Dendritic cell treated with granulocyte-macrophage colony-stimulating factor and Interleukin-4, amounts not matched to agents 40 ng/mL and 50 ng/mL, for 4 days (primary cell): ENCODE measurements at regions of chr12 and their contacts with region 1.

Region 1: GRCh38 chr12:6851921-6852650 is at the start of gene USP5:
- H3K4me3 Mint-ChIP-seq: peak within 1 kb of the TSS; percentile 87
- H3K27ac Mint-ChIP-seq: peak within 1 kb of the TSS; percentile 91
- H3K4me1 Mint-ChIP-seq: peaks cover 35% of the 10 kb centered on the region
- H3K27me3 Mint-ChIP-seq: no peaks in the 10 kb centered on the region

Region 2: DNA sequence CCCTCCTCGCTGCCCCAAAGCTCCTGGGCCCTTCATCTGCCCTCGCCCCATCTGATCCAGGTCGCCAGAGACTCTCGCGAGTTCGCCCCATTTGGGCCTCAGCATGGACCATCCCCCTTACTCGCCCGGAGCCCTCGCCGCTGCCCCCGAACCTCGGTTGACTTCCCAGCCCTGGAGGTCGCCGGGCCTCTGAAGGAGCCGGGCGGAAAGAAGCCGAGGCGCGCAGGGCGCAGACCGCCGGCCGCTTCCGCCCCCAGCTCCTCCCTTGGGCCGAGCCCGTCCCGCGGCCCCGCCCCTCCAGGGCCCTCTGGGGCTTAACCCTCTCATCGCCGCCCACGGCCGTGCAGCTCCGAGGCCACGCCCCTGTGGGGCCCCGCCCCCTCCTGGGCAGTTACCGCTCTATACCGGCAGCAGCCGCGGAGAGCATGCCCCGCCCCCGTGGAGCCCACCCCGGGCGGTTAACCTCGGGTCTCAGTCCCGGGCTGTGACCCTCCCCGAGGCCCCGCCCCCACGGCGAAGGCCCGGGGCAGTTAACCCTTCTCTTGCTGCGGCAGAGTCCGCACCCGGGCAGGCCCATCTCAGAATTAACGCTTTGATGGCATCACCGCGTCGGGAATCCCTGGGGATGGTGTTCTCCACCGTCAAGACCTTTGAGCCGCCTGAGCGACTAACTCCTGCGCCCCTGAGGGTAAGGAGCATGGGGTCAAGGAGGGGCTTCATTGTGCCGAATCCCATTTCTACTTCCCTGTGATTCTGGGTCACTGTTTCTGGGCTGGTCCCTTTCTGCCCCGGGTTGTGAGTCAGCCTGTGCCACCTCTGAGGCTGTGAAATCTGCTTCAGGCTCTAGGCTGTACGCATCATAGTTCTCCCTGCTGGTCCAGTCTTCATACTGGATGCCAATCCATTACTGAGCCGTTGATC is 21.3 kb after region 1 on chr12 and contains the start of gene SPSB2:
- intact Hi-C with region 1: loop called (anchors 1 kb)
- H3K4me3 Mint-ChIP-seq: peak within 1 kb of the TSS; percentile 97
- H3K27ac Mint-ChIP-seq: peak within 1 kb of the TSS; percentile 87
- H3K4me1 Mint-ChIP-seq: peaks cover 51% of the 10 kb centered on the region
- H3K27me3 Mint-ChIP-seq: no peaks in the 10 kb centered on the region

Region 3: GRCh38 chr12:6914246-6914946 is 62.3 kb after region 1 on chr12 and contains the start of gene ENO2:
- intact Hi-C with region 1: no loop called
- H3K4me3 Mint-ChIP-seq: peak within 1 kb of the TSS; percentile 84
- H3K27ac Mint-ChIP-seq: peak within 1 kb of the TSS; percentile 45
- H3K4me1 Mint-ChIP-seq: peaks cover 46% of the 10 kb centered on the region
- H3K27me3 Mint-ChIP-seq: peaks cover 69% of the 10 kb centered on the region